ENCODE measurements at regions of chr6 and their contacts with region 1.

Region 1: DNA sequence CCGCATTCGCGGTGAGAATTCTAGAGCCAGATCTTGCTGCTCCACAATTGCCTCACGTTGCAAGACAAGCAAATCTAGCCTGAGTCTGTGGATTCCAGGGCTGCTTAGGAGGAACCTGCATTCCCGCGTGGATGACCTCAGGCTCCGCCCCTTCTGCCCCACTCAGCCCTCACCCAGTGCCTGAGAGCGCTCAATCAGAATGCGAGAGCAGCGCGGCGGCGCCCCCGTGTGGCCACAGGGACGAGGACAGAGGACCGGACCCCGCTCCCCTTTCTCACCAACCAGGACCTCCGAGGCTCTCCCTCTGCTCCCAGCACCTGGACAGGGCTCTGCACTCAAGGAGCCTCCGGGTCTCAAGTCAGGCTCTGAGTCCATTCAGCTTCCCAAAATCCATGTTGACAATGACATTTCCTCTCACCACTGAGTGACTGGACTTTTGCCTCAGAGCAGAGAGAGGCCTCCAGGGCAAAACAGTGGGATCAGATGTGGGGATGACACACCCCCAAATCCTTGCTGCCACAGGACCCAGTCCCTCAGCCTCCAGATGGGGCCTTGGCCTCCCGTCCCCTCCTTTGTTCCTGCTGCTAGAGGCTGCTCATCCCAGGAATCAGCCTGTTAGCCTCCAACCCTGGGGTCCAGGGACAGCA is 52.0 kb downstream of the RPP21 start:
- DNase-seq: peak; percentile 9
- ATAC-seq: peak; percentile 100
- H3K4me3 ChIP-seq: no peak overlapping the region
- H3K27ac ChIP-seq: no peak overlapping the region
- H3K4me1 ChIP-seq: no peaks in the 10 kb centered on the region
- H3K27me3 ChIP-seq: peaks cover 0 to 3% of the 10 kb centered on the region in 2 experiments; a peak in 3 of 4 replicates
- CTCF ChIP-seq: peak; percentile 87 to 90 (median 89)
- EP300 ChIP-seq: no peak
- POLR2A ChIP-seq: no peak
- RAD21 ChIP-seq: peak; percentile 88

Region 2: GRCh38 chr6:30315156-30315555 is 81.8 kb before region 1 on chr6:
- CTCF ChIA-PET with region 1: no interaction called
- POLR2A ChIA-PET with region 1: no interaction called
- RAD21 ChIA-PET with region 1: no interaction called
- SMC1A ChIA-PET with region 1: no interaction called
- in situ Hi-C with region 1: no loop called
- intact Hi-C with region 1: no loop called
- DNase-seq: no peak
- ATAC-seq: no peak
- H3K4me3 ChIP-seq: no peak overlapping the region
- H3K27ac ChIP-seq: no peak overlapping the region
- H3K4me1 ChIP-seq: no peaks in the 10 kb centered on the region
- H3K27me3 ChIP-seq: no peaks in the 10 kb centered on the region
- CTCF ChIP-seq: no peak
- EP300 ChIP-seq: no peak
- POLR2A ChIP-seq: no peak
- RAD21 ChIP-seq: no peak

Region 3: GRCh38 chr6:30357678-30358540 is 39.0 kb before region 1 on chr6:
- CTCF ChIA-PET with region 1: interaction called, 25 read pairs
- POLR2A ChIA-PET with region 1: no interaction called
- RAD21 ChIA-PET with region 1: interaction called, 3 read pairs
- SMC1A ChIA-PET with region 1: interaction called, 3 read pairs
- in situ Hi-C with region 1: no loop called
- intact Hi-C with region 1: loop called (anchors 1 kb)
- DNase-seq: no peak
- ATAC-seq: peak; percentile 94
- H3K4me3 ChIP-seq: no peak overlapping the region
- H3K27ac ChIP-seq: no peak overlapping the region
- H3K4me1 ChIP-seq: no peaks in the 10 kb centered on the region
- H3K27me3 ChIP-seq: peaks cover 2 to 7% of the 10 kb centered on the region in 2 experiments; a peak in 3 of 4 replicates
- CTCF ChIP-seq: peak; percentile 67 to 76 (median 73)
- EP300 ChIP-seq: no peak
- POLR2A ChIP-seq: no peak
- RAD21 ChIP-seq: peak; percentile 63

Measured in GM12878 (cell line).